Sciatic nerve (tissue), 2 donors: ENCODE measurements at regions of chr11 and their contacts with region 1.

Region 1: DNA sequence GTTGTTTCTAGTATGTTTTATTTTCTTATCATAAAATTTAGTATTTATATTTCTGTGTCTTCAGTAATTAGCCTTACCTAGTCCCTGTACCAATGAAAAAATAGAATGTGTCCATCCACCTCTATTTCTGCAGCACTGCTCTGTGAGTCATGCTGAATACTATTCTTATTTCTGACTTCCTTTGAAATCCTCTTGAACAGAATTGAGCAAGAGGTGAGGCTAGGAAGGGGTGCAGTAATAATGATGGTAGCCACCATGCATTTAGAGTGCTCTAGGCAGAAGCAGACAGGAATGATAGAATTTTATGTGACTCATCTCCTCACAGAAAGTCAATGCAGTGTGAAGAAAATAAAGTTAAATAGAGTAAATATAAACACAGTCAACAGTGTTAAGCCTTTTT is 60.0 kb downstream of the OR10A6 start:
- DNase-seq: no peak
- ATAC-seq: no peak

Region 2: GRCh38 chr11:6862961-6863360 is 1008.1 kb before region 1 on chr11 and contains the start of gene OR10A2:
- intact Hi-C with region 1: loop called (anchors 5 kb)
- DNase-seq: no peak
- ATAC-seq: no peak
- total RNA-seq, gene OR10A2: not detected

Region 3: GRCh38 chr11:8033305-8034105 is 162.4 kb after region 1 on chr11:
- intact Hi-C with region 1: no loop called
- DNase-seq: peak; percentile 90
- ATAC-seq: peak; percentile 76